MCF 10A (cell line): ENCODE measurements at regions of chr16 and their contacts with region 1.

Region 1: DNA sequence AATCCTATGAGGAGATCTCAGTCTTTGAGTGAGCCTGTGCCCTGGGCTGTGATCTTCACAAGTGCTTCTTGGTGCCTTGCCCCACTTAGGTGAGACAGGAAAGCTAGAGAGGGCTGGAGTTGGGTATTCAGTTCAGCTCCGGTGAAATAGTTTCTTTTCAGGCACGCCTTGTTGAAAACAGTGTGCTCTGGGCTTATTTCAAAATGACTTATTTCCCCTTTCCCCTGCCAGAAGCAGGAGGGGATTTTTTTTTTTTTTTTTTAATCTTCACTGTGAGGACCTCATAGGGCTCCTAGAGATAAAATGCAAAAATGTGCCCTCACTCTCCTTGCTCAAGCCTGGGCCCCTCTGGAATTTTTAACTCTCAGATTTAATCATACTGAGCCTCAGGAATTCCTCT is 27.2 kb downstream of the MOSMO start:
- DNase-seq: no peak
- H3K4me3 Mint-ChIP-seq: no peak overlapping the region
- H3K27ac Mint-ChIP-seq: no peak overlapping the region
- H3K4me1 Mint-ChIP-seq: peaks cover 13% of the 10 kb centered on the region
- H3K27me3 Mint-ChIP-seq: no peaks in the 10 kb centered on the region
- CTCF ChIP-seq: no peak

Region 2: DNA sequence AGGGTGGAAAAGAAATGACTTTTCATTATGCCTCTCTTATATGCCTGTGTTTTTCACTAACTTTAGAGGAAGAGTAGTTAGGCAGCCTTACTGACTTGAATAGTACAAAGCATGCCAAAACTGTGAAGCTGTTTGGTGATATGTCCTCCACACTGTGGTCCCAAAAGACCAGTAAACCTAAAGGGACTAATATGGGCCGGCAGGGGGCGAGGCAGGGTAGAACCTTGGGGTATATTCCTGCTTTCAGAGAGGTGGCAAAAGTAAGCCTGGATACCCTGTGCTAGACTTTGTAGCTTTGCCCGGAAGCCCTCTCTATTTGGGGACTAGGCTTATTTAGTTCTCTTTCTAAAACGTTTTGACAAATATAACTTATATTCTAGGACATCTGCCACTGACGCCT is 20.7 kb after region 1 on chr16:
- CTCF ChIA-PET with region 1: no interaction called
- POLR2A ChIA-PET with region 1: interaction called, 13 read pairs
- intact Hi-C with region 1: no loop called
- DNase-seq: no peak
- H3K4me3 Mint-ChIP-seq: no peak overlapping the region
- H3K27ac Mint-ChIP-seq: no peak overlapping the region
- H3K4me1 Mint-ChIP-seq: no peaks in the 10 kb centered on the region
- H3K27me3 Mint-ChIP-seq: no peaks in the 10 kb centered on the region
- CTCF ChIP-seq: no peak

Region 3: GRCh38 chr16:22307838-22308237 is 272.7 kb after region 1 on chr16:
- CTCF ChIA-PET with region 1: no interaction called
- POLR2A ChIA-PET with region 1: no interaction called
- intact Hi-C with region 1: no loop called
- DNase-seq: no peak
- H3K4me3 Mint-ChIP-seq: no peak overlapping the region
- H3K27ac Mint-ChIP-seq: no peak overlapping the region
- H3K4me1 Mint-ChIP-seq: no peaks in the 10 kb centered on the region
- H3K27me3 Mint-ChIP-seq: no peaks in the 10 kb centered on the region
- CTCF ChIP-seq: no peak